GM13976 (cell line): ENCODE measurements at regions of chr2 and their contacts with region 1.

Region 1: DNA sequence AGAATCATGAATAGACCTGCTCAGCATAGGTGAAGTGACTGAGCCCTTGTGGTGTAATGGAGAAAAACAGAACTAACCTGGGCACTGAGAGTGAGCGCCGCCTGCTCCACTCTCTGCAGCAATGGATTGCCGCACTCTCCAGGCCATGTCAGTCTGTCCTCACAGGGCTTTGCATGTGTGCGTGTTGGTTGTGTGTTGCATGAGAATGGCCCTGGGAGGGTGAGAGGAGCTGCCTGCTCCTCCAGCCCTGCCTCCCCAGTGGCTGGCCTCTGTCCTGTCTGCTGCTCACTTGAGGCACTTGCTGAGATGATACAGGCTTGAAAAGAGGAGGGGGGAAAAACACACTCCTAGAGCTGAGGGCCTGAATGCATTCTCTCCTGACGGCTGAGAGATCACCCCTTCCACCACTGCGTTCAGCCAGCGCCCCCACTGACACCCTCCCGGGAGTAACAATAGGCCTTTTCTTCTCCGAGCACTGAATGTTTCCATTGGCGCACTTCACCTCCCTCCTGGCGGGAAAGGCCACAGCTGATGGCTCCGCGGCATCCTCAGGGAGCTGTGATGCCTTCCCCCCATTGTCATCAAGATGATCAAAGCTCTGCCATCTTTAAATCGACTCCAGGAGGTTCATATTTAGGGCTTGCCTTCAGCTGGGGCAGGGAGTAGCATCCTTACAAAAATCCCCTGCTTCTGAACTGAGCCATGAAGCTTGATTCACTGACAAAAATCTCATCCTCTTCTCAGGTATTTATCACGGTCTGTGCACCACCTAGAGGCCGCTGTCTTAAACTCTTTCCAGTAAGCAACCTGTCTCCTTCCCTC is 49.9 kb upstream of the DAPL1 start:
- DNase-seq: peak; percentile 55
- CTCF ChIP-seq: peak; percentile 33

Region 2: GRCh38 chr2:158179660-158180059 is 565.6 kb before region 1 on chr2:
- in situ Hi-C with region 1: loop called (anchors 10 kb)
- DNase-seq: no peak
- CTCF ChIP-seq: no peak

Region 3: GRCh38 chr2:158456309-158457066 is 288.8 kb before region 1 on chr2 and contains the starts of genes CCDC148 and PKP4:
- in situ Hi-C with region 1: loop called (anchors 25 kb)
- DNase-seq: peak; percentile 95
- CTCF ChIP-seq: peak; percentile 14